Endothelial cell of umbilical vein (primary cell): ENCODE measurements at regions of chr6 and their contacts with region 1.

Region 1: DNA sequence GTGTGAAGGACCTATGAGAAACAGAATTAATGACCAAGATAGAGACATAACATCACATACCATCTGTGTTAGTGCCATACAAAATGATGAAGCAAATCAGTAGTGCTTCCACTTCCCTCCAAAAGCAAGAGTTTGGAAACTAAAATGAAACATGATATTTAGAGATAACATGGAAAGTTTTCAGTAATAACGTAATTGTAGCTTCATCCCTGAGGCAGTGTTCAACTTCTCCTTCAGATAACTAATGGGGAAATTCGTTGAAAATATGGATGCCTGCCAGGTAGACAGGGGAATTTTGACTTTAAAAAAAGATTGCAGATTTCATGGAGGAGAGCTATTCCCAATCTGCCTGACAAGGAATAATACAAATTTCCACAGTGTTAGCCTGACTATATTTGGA is 248.3 kb upstream of the IRAK1BP1 start:
- DNase-seq: no peak
- H3K4me3 ChIP-seq: no peak overlapping the region
- H3K27ac ChIP-seq: no peak overlapping the region
- H3K4me1 ChIP-seq: peaks cover 10% of the 10 kb centered on the region
- H3K27me3 ChIP-seq: no peaks in the 10 kb centered on the region
- CTCF ChIP-seq: no peak
- POLR2A ChIP-seq: no peak

Region 2: GRCh38 chr6:78460711-78461110 is 158.3 kb before region 1 on chr6:
- CTCF ChIA-PET with region 1: no interaction called
- POLR2A ChIA-PET with region 1: no interaction called
- dilution Hi-C with region 1: no loop called
- intact Hi-C with region 1: no loop called
- DNase-seq: no peak
- H3K4me3 ChIP-seq: no peak overlapping the region
- H3K27ac ChIP-seq: no peak overlapping the region
- H3K4me1 ChIP-seq: no peaks in the 10 kb centered on the region
- H3K27me3 ChIP-seq: no peaks in the 10 kb centered on the region
- CTCF ChIP-seq: no peak
- POLR2A ChIP-seq: no peak

Region 3: GRCh38 chr6:78605909-78606446 is 13.0 kb before region 1 on chr6:
- CTCF ChIA-PET with region 1: interaction called, 11 read pairs
- POLR2A ChIA-PET with region 1: no interaction called
- dilution Hi-C with region 1: no loop called
- intact Hi-C with region 1: no loop called
- DNase-seq: peak; percentile 93
- H3K4me3 ChIP-seq: peak overlapping the region; percentile 21 to 100 (median 98)
- H3K27ac ChIP-seq: peak overlapping the region; percentile 96
- H3K4me1 ChIP-seq: peaks cover 56% of the 10 kb centered on the region
- H3K27me3 ChIP-seq: no peaks in the 10 kb centered on the region
- CTCF ChIP-seq: no peak
- POLR2A ChIP-seq: no peak